HAP-1 (cell line): ENCODE measurements at regions of chr19 and their contacts with region 1.

Region 1: DNA sequence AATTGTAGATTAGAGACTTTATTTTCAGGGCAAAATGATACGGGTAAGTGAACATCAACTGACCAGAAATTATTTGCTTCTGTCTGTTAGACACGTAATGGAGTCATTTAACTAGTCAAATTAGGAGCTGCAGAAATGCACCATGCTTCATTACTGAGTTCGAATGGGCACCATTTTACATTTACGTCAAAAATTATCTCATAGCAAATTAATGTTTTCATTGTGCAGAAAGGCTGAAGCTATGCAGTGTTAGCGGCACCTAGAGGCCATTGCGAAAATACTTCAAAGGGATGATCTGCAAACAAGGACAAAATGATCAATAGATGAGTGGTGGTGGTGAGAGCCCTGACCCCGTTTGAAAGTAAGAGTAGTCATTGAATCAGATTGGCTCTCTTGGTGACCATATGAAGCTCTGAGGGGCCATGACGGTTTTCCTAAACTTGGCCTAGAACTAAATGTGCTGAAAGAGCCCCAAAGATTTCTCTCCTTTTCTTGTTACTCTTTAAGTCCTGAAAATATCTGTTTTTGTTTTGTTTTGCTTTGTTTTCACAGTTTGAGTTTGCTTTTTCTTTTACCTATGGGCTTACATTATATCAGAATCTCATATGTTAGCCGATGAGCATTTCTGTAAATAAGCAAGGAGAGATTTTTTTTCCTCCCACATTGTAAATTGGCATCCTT is 277.9 kb downstream of the ZNF536 start:
- DNase-seq: peak; percentile 74 to 76
- H3K4me3 ChIP-seq: no peak overlapping the region
- H3K4me1 ChIP-seq: peaks cover 69% of the 10 kb centered on the region
- H3K27me3 ChIP-seq: no peaks in the 10 kb centered on the region

Region 2: DNA sequence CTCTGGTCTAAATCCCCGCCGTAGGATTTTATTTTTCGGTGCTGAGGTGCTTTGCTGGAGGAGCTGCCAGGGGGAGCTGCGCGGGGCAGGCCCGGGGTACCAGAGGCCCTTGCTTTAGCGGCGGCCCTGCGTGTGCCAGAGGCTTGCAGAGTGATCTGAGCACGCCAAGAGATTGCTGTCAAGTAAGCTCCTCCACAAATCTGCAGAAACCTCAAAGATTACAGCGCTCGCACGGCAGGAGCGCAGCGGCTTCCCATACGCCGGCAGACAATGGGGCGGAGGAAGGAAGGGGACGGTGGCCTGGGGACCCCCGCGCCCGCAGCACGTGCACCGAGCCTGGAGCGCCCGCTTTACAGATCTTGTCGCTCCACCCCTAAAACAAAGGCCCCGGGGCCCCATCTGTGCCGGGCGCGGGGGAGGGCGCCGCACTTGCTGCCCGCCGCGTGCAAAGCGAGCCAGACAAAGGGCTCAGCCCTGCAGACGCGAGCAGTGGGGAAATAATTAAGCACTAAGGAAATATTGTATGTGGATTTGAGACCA is 925.9 kb before region 1 on chr19:
- in situ Hi-C with region 1: loop called (anchors 10 kb)
- DNase-seq: peak; percentile 60 to 74
- H3K4me3 ChIP-seq: peak overlapping the region; percentile 8
- H3K4me1 ChIP-seq: peaks cover 24% of the 10 kb centered on the region
- H3K27me3 ChIP-seq: no peaks in the 10 kb centered on the region

Region 3: GRCh38 chr19:30227661-30228428 is 422.2 kb before region 1 on chr19:
- in situ Hi-C with region 1: loop called (anchors 10 kb)
- DNase-seq: peak; percentile 77 to 87
- H3K4me3 ChIP-seq: peak overlapping the region; percentile 58
- H3K4me1 ChIP-seq: peaks cover 23% of the 10 kb centered on the region
- H3K27me3 ChIP-seq: no peaks in the 10 kb centered on the region

Region 4: DNA sequence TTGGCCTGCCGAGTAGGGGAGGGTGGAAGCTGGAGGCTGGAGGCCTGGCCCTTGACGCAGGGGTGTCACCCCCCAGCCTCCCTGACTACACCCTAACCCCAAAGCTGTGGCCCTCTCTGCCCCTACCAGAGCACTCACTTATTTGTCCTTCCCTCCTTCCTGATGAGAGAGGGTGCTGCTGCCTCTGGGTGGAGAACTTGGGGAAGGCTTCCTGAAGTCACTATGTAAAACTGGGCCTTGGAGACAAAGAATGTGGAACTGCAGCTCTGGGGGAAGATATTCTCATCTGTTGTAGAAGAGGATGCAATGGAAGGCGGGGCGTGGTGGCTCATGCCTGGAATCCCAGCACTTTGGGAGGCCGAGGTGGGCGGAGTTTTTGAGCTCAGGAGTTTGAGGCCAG is 207.3 kb after region 1 on chr19:
- in situ Hi-C with region 1: no loop called
- DNase-seq: no peak
- H3K4me3 ChIP-seq: no peak overlapping the region
- H3K4me1 ChIP-seq: no peaks in the 10 kb centered on the region
- H3K27me3 ChIP-seq: no peaks in the 10 kb centered on the region

Region 5: GRCh38 chr19:30930941-30931706 is 281.1 kb after region 1 on chr19:
- in situ Hi-C with region 1: no loop called
- DNase-seq: no peak
- H3K4me3 ChIP-seq: no peak overlapping the region
- H3K4me1 ChIP-seq: no peaks in the 10 kb centered on the region
- H3K27me3 ChIP-seq: no peaks in the 10 kb centered on the region